Heart left ventricle (tissue), 16 donors: ENCODE measurements at regions of chr9 and their contacts with region 1.

Region 1: DNA sequence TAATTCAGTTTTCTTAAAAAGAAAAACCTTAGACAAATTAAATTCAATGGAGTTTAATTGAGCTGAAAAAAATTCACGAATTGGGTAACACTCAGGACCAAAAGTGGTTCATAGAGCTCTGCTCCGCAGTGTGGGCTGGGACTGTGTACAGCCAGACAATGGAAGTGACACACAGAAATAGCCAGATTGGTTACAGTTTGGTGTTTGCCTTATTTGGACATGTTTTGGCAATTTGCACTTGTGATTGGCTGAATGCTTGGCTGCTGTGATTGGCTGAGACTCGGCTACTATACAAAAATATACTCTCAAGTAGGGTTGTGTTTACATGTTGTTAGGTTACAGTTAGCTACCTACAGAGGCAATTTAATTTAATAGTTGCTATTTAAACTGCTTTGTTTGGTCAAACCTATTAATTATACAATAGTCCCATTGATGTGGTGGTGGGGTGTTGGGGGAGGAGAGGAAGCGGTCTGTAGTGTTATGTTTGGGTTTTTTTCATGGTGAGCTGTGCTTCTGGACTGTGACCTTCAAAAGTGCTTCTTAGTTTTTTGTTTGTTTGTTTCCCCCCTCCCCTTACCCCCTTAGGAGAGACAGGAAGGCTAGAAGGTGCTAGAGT is 95.2 kb downstream of the CNTLN start:
- DNase-seq: no peak
- ATAC-seq: no peak
- H3K4me3 ChIP-seq: no peak overlapping the region
- H3K27ac ChIP-seq: no peak overlapping the region
- H3K4me1 ChIP-seq: no peaks in the 10 kb centered on the region
- H3K27me3 ChIP-seq: no peaks in the 10 kb centered on the region
- CTCF ChIP-seq: no peak
- POLR2A ChIP-seq: no peak

Region 2: DNA sequence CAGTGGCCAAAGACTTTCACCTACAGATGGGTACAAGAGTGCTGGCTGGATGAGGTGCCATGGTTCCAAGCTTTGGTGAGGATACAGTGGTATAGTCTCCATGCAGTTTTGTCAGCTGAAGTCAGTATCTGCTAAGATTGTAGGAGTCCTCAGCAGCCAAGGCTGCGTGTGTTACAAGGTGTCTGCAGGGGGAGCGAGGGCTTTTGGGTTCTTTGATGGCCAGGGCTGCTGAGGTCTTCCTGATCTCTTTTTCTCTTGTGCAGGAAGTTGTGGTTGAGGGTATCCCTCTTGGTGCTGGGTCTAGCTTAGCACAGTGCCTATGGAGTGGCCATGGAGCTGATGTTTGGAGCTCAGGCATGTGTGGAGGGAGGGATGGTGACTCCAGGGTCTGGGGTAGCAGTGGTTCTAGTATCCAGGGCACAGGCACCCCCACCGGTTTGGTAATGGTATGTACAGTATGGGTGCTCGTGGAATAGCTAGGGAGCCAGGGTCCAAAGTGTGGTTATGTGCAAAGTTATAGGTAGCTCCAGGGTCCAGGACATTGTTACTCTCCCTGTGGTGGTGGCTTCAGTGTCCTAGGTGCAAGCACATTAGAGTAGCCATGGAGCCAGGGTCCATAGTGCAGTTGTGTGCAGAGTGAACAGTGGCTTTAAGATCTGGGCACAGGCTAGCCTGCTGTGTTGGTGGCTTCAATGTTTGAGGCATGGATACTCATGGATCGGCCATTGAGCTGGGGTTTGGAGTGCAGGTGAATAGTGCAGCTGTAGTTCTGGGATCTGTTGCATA is 58.6 kb before region 1 on chr9:
- intact Hi-C with region 1: loop called in 1 of 10 experiments (anchors 5 kb)
- DNase-seq: no peak
- ATAC-seq: no peak
- H3K4me3 ChIP-seq: no peak overlapping the region
- H3K27ac ChIP-seq: no peak overlapping the region
- H3K4me1 ChIP-seq: no peaks in the 10 kb centered on the region
- H3K27me3 ChIP-seq: no peaks in the 10 kb centered on the region
- CTCF ChIP-seq: no peak
- POLR2A ChIP-seq: no peak